ENCODE measurements at regions of chr10 and their contacts with region 1.

Region 1: DNA sequence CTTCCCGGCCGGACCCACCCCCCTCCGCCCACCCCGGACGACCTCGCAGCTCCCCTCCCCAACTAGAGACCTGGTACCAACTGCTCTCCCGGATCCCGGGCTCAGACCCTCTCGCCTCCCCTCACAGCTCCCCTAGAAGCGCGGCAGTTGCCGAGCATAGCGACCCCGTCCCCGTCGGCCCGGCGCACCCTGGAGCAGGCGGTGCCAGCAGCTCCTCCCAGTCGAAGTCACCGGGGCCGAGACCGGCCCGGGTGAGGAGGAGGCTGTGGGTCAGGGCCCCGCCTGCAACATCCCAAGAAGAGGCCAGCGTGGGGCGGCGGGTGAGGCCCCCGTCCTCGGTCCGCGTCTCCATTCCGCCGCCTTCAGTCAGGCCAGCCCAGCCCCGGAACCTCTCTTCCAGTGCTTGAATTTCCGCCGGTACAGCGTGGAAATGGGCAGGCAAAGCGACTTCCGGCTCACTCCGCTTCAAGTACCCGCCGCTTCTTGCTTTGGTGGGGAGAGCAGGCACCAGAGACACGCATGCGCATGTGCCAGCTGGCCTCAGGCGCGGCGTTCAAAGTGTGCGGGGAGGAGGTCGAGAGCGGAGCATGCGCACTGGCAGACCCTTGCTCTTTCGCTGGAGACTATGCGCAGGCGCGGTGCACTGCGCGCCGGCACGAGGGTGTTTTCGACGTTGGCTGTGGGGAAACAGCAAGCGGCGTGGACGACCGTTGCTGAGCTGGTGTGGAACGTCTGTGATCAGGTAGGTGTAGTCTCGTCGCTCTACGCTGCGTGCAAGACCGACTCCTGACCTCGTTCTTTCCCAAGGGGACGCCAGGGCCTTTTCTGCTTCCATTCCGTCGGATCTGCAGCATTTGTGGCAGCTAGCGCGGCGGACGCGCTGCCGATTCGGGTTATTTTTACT is at the start of gene C10orf88:
- DNase-seq: peak; percentile 99
- ATAC-seq: peak; percentile 99
- H3K4me3 ChIP-seq: peak within 1 kb of the TSS; percentile 72 to 83
- H3K27ac ChIP-seq: peak within 1 kb of the TSS; percentile 66; the same call in 1 of the 2 replicates
- H3K4me1 ChIP-seq: peaks cover 0 to 16% of the 10 kb centered on the region in 2 experiments; a peak in 2 of 4 replicates
- H3K27me3 ChIP-seq: no peaks in the 10 kb centered on the region
- CTCF ChIP-seq: no peak
- POLR2A ChIP-seq: peak; percentile 43
- RAD21 ChIP-seq: no peak
- total RNA-seq, gene C10orf88: 16.2 TPM

Region 2: DNA sequence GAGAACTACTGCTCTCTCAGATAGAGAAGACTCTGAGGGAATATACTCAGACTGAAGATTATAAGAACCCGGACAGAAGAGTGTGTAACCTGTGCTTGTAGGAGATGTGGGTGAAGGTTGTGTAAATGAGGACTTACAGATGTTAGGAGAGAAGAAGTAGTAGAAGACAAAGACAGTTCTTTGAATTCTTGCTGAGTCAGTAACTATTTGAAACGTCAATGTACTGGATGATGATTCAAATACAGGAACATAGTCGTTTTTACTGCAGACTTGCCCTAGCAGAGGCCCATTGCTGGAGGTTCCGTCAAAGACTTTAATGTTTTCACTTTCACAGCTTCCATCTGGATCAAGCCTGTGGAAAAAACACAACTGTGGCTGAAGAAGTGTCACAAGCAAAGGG is 115.2 kb before region 1 on chr10:
- CTCF ChIA-PET with region 1: no interaction called
- POLR2A ChIA-PET with region 1: no interaction called
- RAD21 ChIA-PET with region 1: no interaction called
- intact Hi-C with region 1: no loop called
- DNase-seq: no peak
- ATAC-seq: no peak
- H3K4me3 ChIP-seq: no peak overlapping the region
- H3K27ac ChIP-seq: no peak overlapping the region
- H3K4me1 ChIP-seq: no peaks in the 10 kb centered on the region
- H3K27me3 ChIP-seq: peaks cover 34% of the 10 kb centered on the region
- CTCF ChIP-seq: no peak
- POLR2A ChIP-seq: no peak
- RAD21 ChIP-seq: no peak

Region 3: GRCh38 chr10:122861711-122862161 is 92.3 kb before region 1 on chr10:
- CTCF ChIA-PET with region 1: no interaction called
- POLR2A ChIA-PET with region 1: no interaction called
- RAD21 ChIA-PET with region 1: no interaction called
- intact Hi-C with region 1: no loop called
- DNase-seq: no peak
- ATAC-seq: peak; percentile 42; the same call in 1 of the 2 replicates
- H3K4me3 ChIP-seq: no peak overlapping the region
- H3K27ac ChIP-seq: no peak overlapping the region
- H3K4me1 ChIP-seq: peaks cover 0 to 26% of the 10 kb centered on the region in 2 experiments; a peak in 2 of 4 replicates
- H3K27me3 ChIP-seq: peaks cover 6% of the 10 kb centered on the region; the same call in 1 of the 2 replicates
- CTCF ChIP-seq: no peak
- POLR2A ChIP-seq: no peak
- RAD21 ChIP-seq: no peak

Region 4: GRCh38 chr10:122980209-122981065 is 26.4 kb after region 1 on chr10 and contains the start of gene PSTK:
- CTCF ChIA-PET with region 1: interaction called, 7 read pairs
- POLR2A ChIA-PET with region 1: no interaction called
- RAD21 ChIA-PET with region 1: no interaction called
- intact Hi-C with region 1: loop called (anchors 1 kb)
- DNase-seq: peak; percentile 94
- ATAC-seq: peak; percentile 97
- H3K4me3 ChIP-seq: peak within 1 kb of the TSS; percentile 52 to 57
- H3K27ac ChIP-seq: peak within 1 kb of the TSS; percentile 78
- H3K4me1 ChIP-seq: peaks cover 8 to 16% of the 10 kb centered on the region in 2 experiments; a peak in 3 of 4 replicates
- H3K27me3 ChIP-seq: no peaks in the 10 kb centered on the region
- CTCF ChIP-seq: peak in 2 of 3 experiments; percentile 86 to 97; a peak in 4 of 6 replicates
- POLR2A ChIP-seq: peak; percentile 33
- RAD21 ChIP-seq: peak; percentile 35; the same call in 1 of the 2 replicates
- total RNA-seq, gene PSTK: 4.4 TPM